ENCODE measurements at regions of chr10 and their contacts with region 1.

Region 1: DNA sequence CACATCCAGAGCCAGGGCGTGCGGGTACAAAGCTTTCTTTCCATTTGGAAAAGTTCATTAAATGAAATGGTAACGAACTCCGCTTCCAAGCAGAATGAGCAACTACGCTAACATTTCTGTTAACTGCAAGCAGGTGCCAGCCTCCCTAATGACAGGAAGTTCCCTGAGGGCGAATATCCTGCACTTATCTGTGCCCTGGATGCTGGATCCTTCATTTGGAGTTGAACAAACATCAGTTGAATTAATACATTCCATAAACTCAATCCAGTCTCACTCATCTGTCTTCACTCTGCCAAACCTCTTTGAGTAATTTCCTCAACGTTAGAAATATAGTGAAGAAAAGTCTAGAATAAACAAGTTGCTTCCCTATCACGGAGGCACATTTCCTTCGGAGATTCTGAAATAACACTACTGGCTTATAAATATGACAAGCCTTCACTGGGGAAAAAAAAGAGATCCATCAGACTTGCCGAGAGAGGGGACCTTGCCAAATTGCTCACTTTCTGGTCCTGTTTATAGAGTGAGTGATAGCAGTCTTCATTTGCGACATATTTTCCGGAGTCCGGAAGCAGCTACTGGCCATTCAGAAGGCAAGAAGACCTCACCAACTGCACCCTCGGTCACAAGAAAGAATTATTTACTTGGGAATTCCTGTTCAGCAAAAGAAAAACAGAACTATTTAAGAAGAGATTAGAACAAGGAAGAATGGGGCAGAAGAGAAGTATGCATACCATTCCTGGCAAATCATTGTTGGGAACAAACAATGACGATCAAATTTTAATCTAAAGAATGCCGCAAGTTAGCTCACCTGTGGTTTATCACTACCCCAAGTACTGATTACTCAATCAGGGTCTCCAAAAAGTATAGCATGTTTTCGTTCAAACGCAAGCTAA is 196.4 kb downstream of the FAM107B start:
- DNase-seq: peak; percentile 100
- H3K4me3 ChIP-seq: peak overlapping the region in 1 of 3 experiments; percentile 42
- H3K27ac ChIP-seq: peak overlapping the region; percentile 97
- H3K4me1 ChIP-seq: peaks cover 78% of the 10 kb centered on the region
- H3K27me3 ChIP-seq: no peaks in the 10 kb centered on the region
- CTCF ChIP-seq: no peak
- POLR2A ChIP-seq: peak; percentile 82

Region 2: DNA sequence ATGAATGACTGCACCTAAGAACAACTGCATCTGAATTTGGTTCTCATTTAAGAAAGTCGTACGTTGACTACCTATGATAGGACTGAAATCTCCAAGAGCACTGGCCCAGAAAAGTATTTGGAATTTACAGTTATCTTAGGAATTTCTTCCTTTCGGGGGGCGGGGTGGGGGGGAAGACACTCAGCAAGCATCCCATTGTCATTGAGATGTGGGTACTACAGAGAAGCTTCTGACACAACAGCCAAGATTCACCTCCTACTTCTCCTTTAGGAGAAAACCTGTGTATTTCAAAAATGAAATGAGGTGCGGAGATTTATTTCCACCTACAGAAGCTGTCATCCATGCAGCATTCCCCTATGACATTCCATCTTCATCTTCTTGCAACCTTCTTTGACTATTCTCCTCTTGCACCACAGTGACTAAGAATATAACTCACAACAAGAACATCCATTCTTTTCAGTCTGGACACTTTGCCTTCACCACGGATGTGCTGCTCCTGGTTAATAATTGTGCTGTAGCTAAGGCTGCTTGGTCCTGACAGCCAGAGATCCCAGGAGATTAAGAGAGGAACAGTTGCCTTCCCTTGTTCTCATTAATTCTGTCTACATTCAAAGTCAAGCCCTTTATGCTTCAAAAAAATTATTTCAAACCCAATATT is 149.1 kb before region 1 on chr10:
- CTCF ChIA-PET with region 1: no interaction called
- POLR2A ChIA-PET with region 1: no interaction called
- dilution Hi-C with region 1: no loop called
- intact Hi-C with region 1: no loop called
- DNase-seq: no peak
- H3K4me3 ChIP-seq: no peak overlapping the region
- H3K27ac ChIP-seq: no peak overlapping the region
- H3K4me1 ChIP-seq: no peaks in the 10 kb centered on the region
- H3K27me3 ChIP-seq: peaks cover 2 to 24% of the 10 kb centered on the region in 2 experiments
- CTCF ChIP-seq: no peak
- POLR2A ChIP-seq: no peak

Region 3: GRCh38 chr10:14507176-14507575 is 71.1 kb before region 1 on chr10:
- CTCF ChIA-PET with region 1: no interaction called
- POLR2A ChIA-PET with region 1: no interaction called
- dilution Hi-C with region 1: no loop called
- intact Hi-C with region 1: loop called (anchors 1 kb)
- DNase-seq: peak; percentile 85
- H3K4me3 ChIP-seq: no peak overlapping the region
- H3K27ac ChIP-seq: no peak overlapping the region
- H3K4me1 ChIP-seq: peaks cover 15% of the 10 kb centered on the region
- H3K27me3 ChIP-seq: no peaks in the 10 kb centered on the region
- CTCF ChIP-seq: no peak
- POLR2A ChIP-seq: no peak

Region 4: DNA sequence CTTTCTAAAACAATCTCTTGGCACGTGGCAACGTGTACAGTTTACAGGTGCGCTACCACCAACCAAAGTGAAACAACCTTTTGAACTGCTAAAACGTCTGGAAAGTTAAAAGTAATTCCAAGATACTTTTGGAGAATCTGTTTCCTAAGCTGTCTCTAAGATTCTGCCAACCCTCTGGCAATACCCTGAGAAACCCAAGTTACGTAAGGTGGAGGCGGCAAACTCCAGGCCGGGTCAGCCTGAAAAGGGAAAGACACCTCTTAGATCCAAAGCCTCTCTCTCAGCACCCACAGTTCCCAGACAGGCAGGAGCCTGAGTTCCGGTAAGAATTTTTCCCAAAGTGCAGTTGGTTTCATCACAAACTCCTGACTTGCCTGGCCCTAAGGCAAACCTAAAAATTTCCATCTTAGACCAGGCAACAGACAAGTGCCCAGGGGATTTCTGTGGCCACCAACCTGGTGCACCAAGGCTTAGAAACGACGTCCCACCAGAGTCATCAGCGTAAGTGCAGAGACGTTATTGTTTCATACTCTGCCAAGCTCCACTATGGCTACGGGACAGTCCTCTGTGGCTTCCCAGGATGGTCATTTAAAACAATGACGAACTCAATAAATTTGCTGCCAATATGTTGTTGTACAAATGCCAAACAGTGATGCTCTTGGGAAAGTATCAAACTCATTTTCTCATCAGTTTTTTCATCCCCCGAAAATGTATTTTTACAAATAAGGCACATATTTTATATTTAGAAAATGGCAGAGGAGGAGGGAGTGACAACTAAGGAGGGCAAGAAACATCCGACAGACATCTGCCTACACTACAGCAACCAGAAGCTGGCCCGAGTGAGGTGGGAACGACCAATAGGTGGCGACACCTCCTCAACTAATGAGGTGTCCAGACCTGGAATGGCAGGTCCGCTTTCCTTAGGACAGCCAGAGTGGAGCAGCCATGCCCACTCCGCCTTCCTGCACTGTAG is 41.8 kb before region 1 on chr10:
- CTCF ChIA-PET with region 1: interaction called, 9 read pairs
- POLR2A ChIA-PET with region 1: no interaction called
- dilution Hi-C with region 1: no loop called
- intact Hi-C with region 1: loop called (anchors 2 kb)
- DNase-seq: peak; percentile 65
- H3K4me3 ChIP-seq: no peak overlapping the region
- H3K27ac ChIP-seq: no peak overlapping the region
- H3K4me1 ChIP-seq: no peaks in the 10 kb centered on the region
- H3K27me3 ChIP-seq: no peaks in the 10 kb centered on the region
- CTCF ChIP-seq: peak; percentile 55 to 59
- POLR2A ChIP-seq: no peak

Region 5: DNA sequence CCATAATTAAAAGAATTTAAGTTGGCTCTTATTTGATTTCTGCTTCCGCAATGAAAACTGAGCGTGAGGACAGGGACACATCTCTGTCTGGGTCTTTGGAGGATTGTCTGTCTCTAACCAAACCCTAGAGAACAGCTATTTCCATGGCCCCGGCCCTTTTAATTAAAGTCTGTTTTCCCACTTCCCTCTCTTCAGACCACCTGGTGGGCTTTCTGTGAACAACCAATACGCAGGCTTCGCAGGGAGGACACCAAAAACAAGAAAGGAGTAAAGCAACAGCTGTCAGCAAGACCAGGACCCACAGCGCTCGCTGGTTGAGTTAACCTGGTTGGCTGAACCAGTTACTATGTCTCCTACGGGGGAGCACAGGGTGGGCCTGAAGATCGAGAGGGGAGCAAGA is 30.5 kb before region 1 on chr10:
- CTCF ChIA-PET with region 1: interaction called, 18 read pairs
- POLR2A ChIA-PET with region 1: no interaction called
- dilution Hi-C with region 1: no loop called
- intact Hi-C with region 1: loop called (anchors 2 kb)
- DNase-seq: no peak
- H3K4me3 ChIP-seq: no peak overlapping the region
- H3K27ac ChIP-seq: no peak overlapping the region
- H3K4me1 ChIP-seq: peaks cover 30% of the 10 kb centered on the region
- H3K27me3 ChIP-seq: no peaks in the 10 kb centered on the region
- CTCF ChIP-seq: peak; percentile 20 to 22
- POLR2A ChIP-seq: no peak

Region 6: GRCh38 chr10:14556285-14556956 is 21.9 kb before region 1 on chr10:
- CTCF ChIA-PET with region 1: interaction called, 3 read pairs
- POLR2A ChIA-PET with region 1: no interaction called
- dilution Hi-C with region 1: no loop called
- intact Hi-C with region 1: loop called (anchors 1 kb)
- DNase-seq: peak; percentile 59
- H3K4me3 ChIP-seq: no peak overlapping the region
- H3K27ac ChIP-seq: peak overlapping the region; percentile 16
- H3K4me1 ChIP-seq: peaks cover 62% of the 10 kb centered on the region
- H3K27me3 ChIP-seq: no peaks in the 10 kb centered on the region
- CTCF ChIP-seq: peak in 1 of 2 donors; percentile 22
- POLR2A ChIP-seq: peak; percentile 52

Region 7: GRCh38 chr10:14588084-14588937 is 10.0 kb after region 1 on chr10:
- CTCF ChIA-PET with region 1: interaction called, 17 read pairs
- POLR2A ChIA-PET with region 1: interaction called, 14 read pairs
- dilution Hi-C with region 1: no loop called
- intact Hi-C with region 1: loop called (anchors 1 kb)
- DNase-seq: peak; percentile 97
- H3K4me3 ChIP-seq: peak overlapping the region in 1 of 3 experiments; percentile 11
- H3K27ac ChIP-seq: peak overlapping the region; percentile 99
- H3K4me1 ChIP-seq: peaks cover 47% of the 10 kb centered on the region
- H3K27me3 ChIP-seq: no peaks in the 10 kb centered on the region
- CTCF ChIP-seq: no peak
- POLR2A ChIP-seq: no peak